ENCODE measurements at regions of chr19 and their contacts with region 1.

Region 1: DNA sequence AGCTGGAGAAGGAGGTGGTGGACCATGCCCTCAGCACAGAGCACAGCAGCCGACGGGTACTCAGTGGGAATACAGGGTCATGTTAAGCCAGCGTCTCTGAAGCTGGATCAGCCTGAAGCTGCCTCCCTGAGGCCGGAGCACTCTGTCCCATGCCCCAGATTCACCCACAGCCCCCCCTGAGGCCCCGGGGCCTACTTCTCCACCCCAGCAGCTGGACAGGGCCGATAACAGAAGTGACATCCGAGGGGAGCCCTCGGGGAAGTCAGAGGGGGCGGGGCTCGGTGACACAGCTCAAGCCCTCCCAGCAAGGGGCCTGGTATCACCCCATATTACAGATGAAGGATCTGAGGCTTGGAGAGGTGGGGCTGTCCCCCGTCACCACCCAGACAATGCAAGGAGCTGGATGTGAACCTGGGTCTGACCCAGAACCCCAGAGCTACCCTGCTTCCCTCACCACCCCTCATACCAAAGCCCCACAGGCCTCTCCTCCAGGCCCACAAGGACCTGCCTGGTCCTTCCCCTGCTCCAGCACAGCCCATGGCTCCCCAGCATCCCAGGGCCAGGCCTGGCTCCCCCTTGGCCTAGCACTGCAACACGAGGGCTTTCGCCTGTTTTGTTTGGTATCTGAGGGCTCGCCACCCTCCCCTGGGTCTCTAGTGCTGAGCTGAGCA is 5.7 kb downstream of the R3HDM4 start:
- DNase-seq: no peak
- ATAC-seq: peak; percentile 67
- H3K4me3 ChIP-seq: no peak overlapping the region
- H3K27ac ChIP-seq: peak overlapping the region; percentile 56; the same call in 1 of the 2 replicates
- H3K4me1 ChIP-seq: peaks cover 40% of the 10 kb centered on the region
- H3K27me3 ChIP-seq: no peaks in the 10 kb centered on the region
- CTCF ChIP-seq: no peak
- EP300 ChIP-seq: no peak
- POLR2A ChIP-seq: no peak
- RAD21 ChIP-seq: no peak

Region 2: GRCh38 chr19:788983-789700 is 118.2 kb before region 1 on chr19:
- CTCF ChIA-PET with region 1: no interaction called
- POLR2A ChIA-PET with region 1: no interaction called
- RAD21 ChIA-PET with region 1: no interaction called
- SMC1A ChIA-PET with region 1: no interaction called
- in situ Hi-C with region 1: no loop called
- intact Hi-C with region 1: no loop called
- DNase-seq: no peak
- ATAC-seq: no peak
- H3K4me3 ChIP-seq: no peak overlapping the region
- H3K27ac ChIP-seq: no peak overlapping the region
- H3K4me1 ChIP-seq: no peaks in the 10 kb centered on the region
- H3K27me3 ChIP-seq: no peaks in the 10 kb centered on the region; a peak in 1 of 4 replicates
- CTCF ChIP-seq: no peak
- EP300 ChIP-seq: no peak
- POLR2A ChIP-seq: no peak
- RAD21 ChIP-seq: no peak

Region 3: GRCh38 chr19:892243-893050 is 14.9 kb before region 1 on chr19:
- CTCF ChIA-PET with region 1: interaction called, 4 read pairs
- POLR2A ChIA-PET with region 1: interaction called, 27 read pairs
- RAD21 ChIA-PET with region 1: interaction called, 24 read pairs
- SMC1A ChIA-PET with region 1: interaction called, 15 read pairs
- in situ Hi-C with region 1: no loop called
- intact Hi-C with region 1: no loop called
- DNase-seq: no peak
- ATAC-seq: peak; percentile 75
- H3K4me3 ChIP-seq: peak overlapping the region; percentile 95
- H3K27ac ChIP-seq: peak overlapping the region; percentile 96
- H3K4me1 ChIP-seq: no peaks in the 10 kb centered on the region
- H3K27me3 ChIP-seq: no peaks in the 10 kb centered on the region
- CTCF ChIP-seq: no peak
- EP300 ChIP-seq: no peak
- POLR2A ChIP-seq: no peak
- RAD21 ChIP-seq: no peak

Region 4: DNA sequence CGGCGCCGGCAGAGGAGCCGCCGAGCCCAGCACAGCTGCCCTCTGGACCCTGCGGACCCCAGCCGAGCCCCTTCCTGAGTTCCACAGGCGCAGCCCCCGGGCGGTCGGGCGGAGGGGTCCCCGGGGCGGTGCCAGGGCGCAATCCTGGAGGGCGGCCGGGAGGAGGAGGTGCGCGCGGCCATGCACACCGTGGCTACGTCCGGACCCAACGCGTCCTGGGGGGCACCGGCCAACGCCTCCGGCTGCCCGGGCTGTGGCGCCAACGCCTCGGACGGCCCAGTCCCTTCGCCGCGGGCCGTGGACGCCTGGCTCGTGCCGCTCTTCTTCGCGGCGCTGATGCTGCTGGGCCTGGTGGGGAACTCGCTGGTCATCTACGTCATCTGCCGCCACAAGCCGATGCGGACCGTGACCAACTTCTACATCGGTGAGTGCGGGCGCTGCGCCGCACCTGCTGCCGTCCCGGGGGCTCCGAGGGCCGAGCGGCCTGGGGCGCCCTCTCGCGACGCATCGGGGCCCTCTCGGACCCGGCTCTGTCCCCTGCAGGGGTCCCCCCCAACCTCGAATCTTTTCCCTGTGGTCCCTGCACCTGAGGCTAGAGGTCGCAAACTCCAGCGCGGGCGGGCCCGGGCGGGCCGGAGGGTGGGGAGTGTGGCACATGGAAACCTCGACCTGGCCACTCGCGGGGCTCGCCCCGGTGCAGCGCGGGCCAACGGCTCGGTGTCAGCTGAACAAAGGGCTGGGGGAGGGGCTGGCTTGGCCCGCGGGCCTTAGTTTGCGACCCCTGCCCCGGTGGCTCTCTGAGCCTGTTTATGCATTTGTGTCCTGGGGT is 10.2 kb after region 1 on chr19 and contains the start of gene KISS1R:
- CTCF ChIA-PET with region 1: interaction called, 3 read pairs
- POLR2A ChIA-PET with region 1: interaction called, 3 read pairs
- RAD21 ChIA-PET with region 1: interaction called, 18 read pairs
- SMC1A ChIA-PET with region 1: interaction called, 4 read pairs
- in situ Hi-C with region 1: no loop called
- intact Hi-C with region 1: no loop called
- DNase-seq: no peak
- ATAC-seq: peak; percentile 44
- H3K4me3 ChIP-seq: peak within 1 kb of the TSS; percentile 41; the same call in 1 of the 2 replicates
- H3K27ac ChIP-seq: no peak within 1 kb of the TSS
- H3K4me1 ChIP-seq: peaks cover 25% of the 10 kb centered on the region
- H3K27me3 ChIP-seq: peaks cover 0 to 2% of the 10 kb centered on the region in 2 experiments; a peak in 1 of 4 replicates
- CTCF ChIP-seq: peak; percentile 60 to 75 (median 74); a peak in 5 of 6 replicates
- EP300 ChIP-seq: no peak
- POLR2A ChIP-seq: 0 out of 2 replicates have a peak, but pooled peaks have one; percentile 16
- RAD21 ChIP-seq: peak; percentile 79
- polyA plus RNA-seq, gene KISS1R: 0.13 TPM in 1 of 2 experiments, not detected in the other

Region 5: DNA sequence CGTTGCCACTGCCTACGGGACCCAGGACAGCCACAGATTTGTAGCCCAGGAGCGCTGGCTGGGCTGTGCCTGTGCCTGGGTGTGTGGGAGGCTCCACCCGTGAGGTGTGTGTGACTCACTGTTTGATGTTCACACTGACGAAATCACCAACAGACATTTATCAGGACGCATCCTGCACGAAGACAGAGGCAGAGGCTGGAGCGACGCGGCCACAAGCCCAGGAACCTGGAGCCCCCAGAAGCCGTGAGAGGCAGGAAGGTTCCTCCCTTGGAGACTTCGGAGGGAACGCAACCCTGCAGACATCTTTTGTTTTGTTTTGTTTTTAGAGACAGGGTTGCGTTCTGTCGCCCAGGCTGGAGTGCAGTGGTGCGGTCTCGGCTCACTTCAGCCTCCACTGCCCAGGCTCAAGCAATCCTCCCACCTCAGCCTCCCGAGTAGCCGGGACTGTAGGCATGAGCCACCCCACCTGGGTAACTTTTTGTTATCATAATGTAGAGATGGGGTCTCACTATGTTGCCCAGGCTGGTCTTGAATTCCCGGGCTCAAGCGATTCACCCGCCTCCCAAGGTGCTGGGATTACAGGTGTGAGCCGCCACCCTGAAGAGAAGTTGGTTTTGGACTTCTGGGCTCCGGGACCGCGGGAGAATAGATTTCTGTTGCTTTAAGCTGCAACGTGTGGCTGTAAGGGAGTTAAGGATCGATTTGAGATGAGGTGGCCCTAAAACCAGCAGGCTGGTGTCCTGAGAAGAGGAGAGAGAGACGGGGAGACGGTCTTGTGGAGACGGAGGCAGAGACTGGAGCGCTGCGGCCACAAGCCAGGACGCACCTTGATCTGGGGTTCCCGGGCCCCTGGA is 51.9 kb after region 1 on chr19:
- CTCF ChIA-PET with region 1: no interaction called
- POLR2A ChIA-PET with region 1: no interaction called
- RAD21 ChIA-PET with region 1: no interaction called
- SMC1A ChIA-PET with region 1: no interaction called
- in situ Hi-C with region 1: no loop called
- intact Hi-C with region 1: no loop called
- DNase-seq: no peak
- ATAC-seq: no peak
- H3K4me3 ChIP-seq: no peak overlapping the region
- H3K27ac ChIP-seq: no peak overlapping the region
- H3K4me1 ChIP-seq: peaks cover 14% of the 10 kb centered on the region
- H3K27me3 ChIP-seq: no peaks in the 10 kb centered on the region
- CTCF ChIP-seq: no peak
- EP300 ChIP-seq: no peak
- POLR2A ChIP-seq: 0 out of 2 replicates have a peak, but pooled peaks have one; percentile 17
- RAD21 ChIP-seq: no peak

Measured in GM12878 (cell line).